IMR-90 (cell line): ENCODE measurements at regions of chr6 and their contacts with region 1.

Region 1: DNA sequence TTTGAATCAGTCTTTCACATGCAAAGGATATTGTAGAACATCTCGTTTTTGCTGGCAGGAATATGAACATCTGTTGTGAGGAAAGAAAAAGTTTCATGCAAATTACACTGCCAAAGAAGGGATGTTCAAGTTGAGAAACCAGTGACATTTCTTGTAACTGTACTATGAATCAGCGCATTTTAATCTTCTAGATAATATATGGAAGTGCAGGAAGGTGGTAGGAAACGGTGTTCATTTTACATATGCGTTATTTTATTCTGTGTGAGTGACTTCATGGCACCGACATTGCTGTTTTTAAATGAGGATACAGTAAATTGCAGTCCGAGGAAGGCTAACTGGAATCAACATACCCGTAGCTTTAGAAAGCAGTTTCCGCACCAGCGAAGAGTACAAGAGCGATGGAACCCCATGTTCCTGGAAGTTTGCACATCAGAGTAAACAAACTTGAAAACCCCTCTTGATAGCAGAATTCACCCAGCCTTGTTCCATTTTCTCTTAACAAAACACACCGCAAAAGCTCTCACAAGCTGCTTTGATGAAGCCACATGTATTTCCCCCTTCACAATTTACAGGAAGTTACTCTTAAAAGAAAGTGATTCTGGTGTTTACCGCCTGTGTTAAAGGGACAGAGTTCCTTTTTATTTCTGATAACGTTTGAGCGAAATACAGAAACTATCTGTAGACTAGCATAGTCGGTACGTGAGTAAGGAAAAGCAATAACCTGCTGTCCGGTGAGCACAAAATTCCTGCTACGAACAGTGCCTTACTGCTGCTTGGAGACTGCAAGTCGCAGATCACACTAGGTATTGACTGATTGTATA is 11.5 kb downstream of the PRDM1 start:
- DNase-seq: peak; percentile 63
- ATAC-seq: peak; percentile 44
- H3K4me3 ChIP-seq: peak overlapping the region; percentile 65
- H3K27ac ChIP-seq: peak overlapping the region; percentile 97
- H3K4me1 ChIP-seq: peaks cover 5% of the 10 kb centered on the region; the same call in 1 of the 2 replicates
- H3K27me3 ChIP-seq: no peaks in the 10 kb centered on the region
- CTCF ChIP-seq: no peak
- POLR2A ChIP-seq: no peak
- RAD21 ChIP-seq: no peak

Region 2: GRCh38 chr6:106125925-106126435 is 28.4 kb after region 1 on chr6:
- CTCF ChIA-PET with region 1: no interaction called
- POLR2A ChIA-PET with region 1: interaction called, 10 read pairs
- dilution Hi-C with region 1: no loop called
- in situ Hi-C with region 1: no loop called
- intact Hi-C with region 1: no loop called
- DNase-seq: no peak
- ATAC-seq: no peak
- H3K4me3 ChIP-seq: no peak overlapping the region
- H3K27ac ChIP-seq: no peak overlapping the region
- H3K4me1 ChIP-seq: peaks cover 2% of the 10 kb centered on the region
- H3K27me3 ChIP-seq: no peaks in the 10 kb centered on the region
- CTCF ChIP-seq: no peak
- POLR2A ChIP-seq: no peak
- RAD21 ChIP-seq: no peak